Lower leg skin (tissue), 4 donors: ENCODE measurements at regions of chr17 and their contacts with region 1.

Region 1: DNA sequence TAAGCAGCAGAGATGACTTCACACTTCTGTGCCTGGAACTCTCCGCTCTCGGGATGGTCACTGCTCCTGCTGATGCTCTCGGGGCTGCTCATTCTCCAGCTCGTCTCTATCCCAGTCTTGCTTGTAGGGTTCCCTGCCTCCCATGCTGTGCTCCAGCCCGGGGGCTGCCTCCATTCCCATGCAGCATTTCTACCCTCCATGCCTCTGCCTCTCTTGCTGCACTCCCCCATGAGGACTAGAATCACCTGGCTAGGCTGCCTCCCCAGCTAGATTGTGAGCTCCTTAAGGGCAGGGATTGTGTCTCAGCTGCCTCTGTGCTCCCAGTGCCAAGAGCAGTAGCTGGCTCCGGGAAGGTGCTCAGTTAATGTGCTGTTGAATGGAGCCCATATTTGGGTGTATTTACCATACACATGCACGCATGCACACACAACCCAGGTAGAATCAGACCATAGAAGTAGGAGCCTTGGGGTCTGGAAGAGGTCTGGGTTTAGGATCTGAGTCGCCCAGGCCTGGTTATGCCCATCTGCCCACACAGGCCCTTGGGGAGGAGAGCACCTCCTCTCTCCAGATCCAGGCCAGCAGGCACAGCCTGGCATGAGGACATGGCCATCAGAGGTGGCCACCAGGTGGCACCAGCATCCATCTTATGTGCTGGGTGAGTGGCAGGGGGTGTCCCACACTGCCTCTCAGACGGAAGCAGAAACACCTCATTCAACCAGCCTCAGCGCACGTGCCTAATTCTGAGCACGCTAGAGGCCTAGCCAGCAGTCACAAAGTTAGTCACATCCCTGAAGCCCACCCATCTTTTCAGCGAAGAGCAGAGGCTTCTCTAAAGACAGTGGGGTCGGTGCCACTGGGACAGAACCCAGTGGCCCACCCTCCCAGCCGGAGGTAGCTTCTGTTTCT is 9.3 kb downstream of the GIT1 start:
- DNase-seq: peak; percentile 75 to 97
- H3K4me3 ChIP-seq: no peak overlapping the region
- CTCF ChIP-seq: peak in 1 of 3 donors; percentile 44
- POLR2A ChIP-seq: no peak

Region 2: GRCh38 chr17:29461483-29462206 is 118.5 kb before region 1 on chr17:
- intact Hi-C with region 1: no loop called
- DNase-seq: no peak
- H3K4me3 ChIP-seq: no peak overlapping the region
- CTCF ChIP-seq: no peak
- POLR2A ChIP-seq: no peak

Region 3: GRCh38 chr17:29613352-29613837 is 33.3 kb after region 1 on chr17:
- intact Hi-C with region 1: loop called (anchors 5 kb)
- DNase-seq: peak; percentile 91 to 99
- H3K4me3 ChIP-seq: no peak overlapping the region
- CTCF ChIP-seq: peak in 1 of 3 donors; percentile 46
- POLR2A ChIP-seq: no peak